ENCODE measurements at regions of chr11 and their contacts with region 1.

Region 1: GRCh38 chr11:61041755-61042518 is 60.4 kb upstream of the CD5 start:
- DNase-seq: peak; percentile 94
- ATAC-seq: peak; percentile 100
- H3K4me3 Mint-ChIP-seq: peak overlapping the region; percentile 64
- H3K27ac Mint-ChIP-seq: peak overlapping the region; percentile 94
- H3K4me1 Mint-ChIP-seq: peaks cover 58% of the 10 kb centered on the region
- H3K27me3 Mint-ChIP-seq: no peaks in the 10 kb centered on the region

Region 2: DNA sequence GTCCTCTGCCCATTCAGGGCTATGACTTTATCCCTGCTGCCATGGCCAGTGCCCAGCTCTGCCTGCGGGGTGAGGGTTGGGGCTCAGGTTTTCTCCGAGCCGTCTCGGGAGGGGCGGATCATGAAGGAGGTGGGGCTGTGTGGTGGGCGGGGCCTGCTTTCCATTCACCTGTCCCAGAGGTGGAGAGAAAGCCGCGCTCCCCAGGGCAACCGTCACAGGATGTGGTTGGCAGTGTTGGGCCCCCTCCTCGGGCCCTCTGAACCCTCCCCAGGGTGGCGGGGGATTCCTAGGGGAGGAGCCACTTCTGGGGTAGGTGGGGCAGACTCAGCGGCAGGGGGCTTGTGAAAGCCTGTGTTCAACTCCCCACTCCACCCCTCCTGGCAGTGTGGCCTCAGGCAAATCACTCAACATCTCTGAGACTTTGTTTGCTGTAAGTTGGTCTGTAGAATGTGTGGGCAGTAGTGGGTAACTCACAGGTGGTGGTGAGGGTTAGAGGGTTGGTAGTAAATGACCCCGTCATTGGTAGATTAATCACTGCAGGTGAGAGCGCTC is 20.2 kb before region 1 on chr11:
- CTCF ChIA-PET with region 1: interaction called, 4 read pairs
- POLR2A ChIA-PET with region 1: interaction called, 67 read pairs
- DNase-seq: peak; percentile 86
- ATAC-seq: peak; percentile 52
- H3K4me3 Mint-ChIP-seq: peak overlapping the region; percentile 19
- H3K27ac Mint-ChIP-seq: peak overlapping the region; percentile 85
- H3K4me1 Mint-ChIP-seq: peaks cover 69% of the 10 kb centered on the region
- H3K27me3 Mint-ChIP-seq: no peaks in the 10 kb centered on the region

Region 3: DNA sequence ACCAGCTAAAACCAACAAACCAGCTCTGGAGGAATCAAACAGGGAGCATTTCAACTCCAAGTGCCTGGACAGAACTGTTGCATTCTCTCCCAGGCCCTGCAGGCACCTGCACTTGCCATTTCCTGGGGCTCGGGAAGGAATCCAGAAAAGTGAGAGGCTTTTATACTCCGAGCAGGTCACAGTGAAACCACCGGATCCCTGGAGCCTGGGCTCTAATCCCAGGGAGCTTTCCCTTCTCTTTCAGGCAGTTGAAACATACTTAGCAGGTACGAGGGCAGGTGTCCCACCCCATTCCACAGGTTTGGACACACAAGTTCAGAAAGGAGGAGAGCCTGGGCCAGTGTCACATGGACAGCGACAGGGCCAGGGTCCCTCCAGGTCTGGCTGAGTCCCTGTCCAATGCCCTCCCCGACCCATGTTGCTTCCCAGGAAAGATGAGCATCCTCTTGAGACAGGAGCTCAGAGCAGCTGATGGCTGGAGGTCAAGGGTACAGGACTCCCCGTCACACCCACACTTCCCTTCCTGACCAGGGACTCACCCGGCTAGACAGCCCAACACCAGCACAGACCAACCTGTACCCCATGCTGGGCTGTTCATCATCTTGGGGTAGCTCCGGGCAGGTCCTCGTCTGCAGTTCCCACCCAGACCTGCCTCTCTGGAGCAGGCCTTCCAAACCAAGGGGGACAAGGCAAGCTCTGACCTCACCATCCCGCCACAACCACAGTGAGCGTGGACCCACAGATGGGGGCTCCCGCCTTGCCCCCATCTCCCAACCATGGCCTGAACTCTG is 10.4 kb after region 1 on chr11:
- CTCF ChIA-PET with region 1: interaction called, 19 read pairs
- POLR2A ChIA-PET with region 1: interaction called, 20 read pairs
- DNase-seq: no peak
- ATAC-seq: no peak
- H3K4me3 Mint-ChIP-seq: no peak overlapping the region
- H3K27ac Mint-ChIP-seq: peak overlapping the region; percentile 70
- H3K4me1 Mint-ChIP-seq: peaks cover 61% of the 10 kb centered on the region
- H3K27me3 Mint-ChIP-seq: no peaks in the 10 kb centered on the region

Region 4: DNA sequence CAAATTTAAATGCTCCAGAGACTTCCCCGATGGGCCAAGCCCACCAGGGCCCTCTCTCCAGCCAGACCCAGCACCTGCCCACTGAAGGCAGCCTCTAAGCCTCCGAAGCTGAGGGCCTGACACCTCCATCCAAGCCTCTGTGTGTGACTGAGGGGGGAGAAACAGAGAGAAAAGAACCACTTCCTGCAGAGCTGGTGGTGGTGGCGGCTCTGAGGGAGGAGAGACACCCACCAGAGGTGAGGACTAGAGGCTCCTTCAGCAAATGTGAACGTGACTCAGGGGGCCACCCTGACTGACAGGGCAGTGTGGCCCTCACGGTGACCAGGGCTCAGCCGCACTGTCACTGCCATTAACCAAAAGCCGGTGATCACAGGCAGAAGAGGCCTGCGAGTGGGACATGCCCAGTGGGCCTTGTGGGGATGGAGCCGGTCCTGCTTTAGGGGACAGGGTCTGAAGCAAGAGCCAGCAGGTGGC is 29.3 kb after region 1 on chr11:
- CTCF ChIA-PET with region 1: interaction called, 13 read pairs
- POLR2A ChIA-PET with region 1: interaction called, 23 read pairs
- DNase-seq: peak; percentile 87
- ATAC-seq: peak; percentile 97
- H3K4me3 Mint-ChIP-seq: peak overlapping the region; percentile 66
- H3K27ac Mint-ChIP-seq: peak overlapping the region; percentile 97
- H3K4me1 Mint-ChIP-seq: peaks cover 83% of the 10 kb centered on the region
- H3K27me3 Mint-ChIP-seq: no peaks in the 10 kb centered on the region

Region 5: DNA sequence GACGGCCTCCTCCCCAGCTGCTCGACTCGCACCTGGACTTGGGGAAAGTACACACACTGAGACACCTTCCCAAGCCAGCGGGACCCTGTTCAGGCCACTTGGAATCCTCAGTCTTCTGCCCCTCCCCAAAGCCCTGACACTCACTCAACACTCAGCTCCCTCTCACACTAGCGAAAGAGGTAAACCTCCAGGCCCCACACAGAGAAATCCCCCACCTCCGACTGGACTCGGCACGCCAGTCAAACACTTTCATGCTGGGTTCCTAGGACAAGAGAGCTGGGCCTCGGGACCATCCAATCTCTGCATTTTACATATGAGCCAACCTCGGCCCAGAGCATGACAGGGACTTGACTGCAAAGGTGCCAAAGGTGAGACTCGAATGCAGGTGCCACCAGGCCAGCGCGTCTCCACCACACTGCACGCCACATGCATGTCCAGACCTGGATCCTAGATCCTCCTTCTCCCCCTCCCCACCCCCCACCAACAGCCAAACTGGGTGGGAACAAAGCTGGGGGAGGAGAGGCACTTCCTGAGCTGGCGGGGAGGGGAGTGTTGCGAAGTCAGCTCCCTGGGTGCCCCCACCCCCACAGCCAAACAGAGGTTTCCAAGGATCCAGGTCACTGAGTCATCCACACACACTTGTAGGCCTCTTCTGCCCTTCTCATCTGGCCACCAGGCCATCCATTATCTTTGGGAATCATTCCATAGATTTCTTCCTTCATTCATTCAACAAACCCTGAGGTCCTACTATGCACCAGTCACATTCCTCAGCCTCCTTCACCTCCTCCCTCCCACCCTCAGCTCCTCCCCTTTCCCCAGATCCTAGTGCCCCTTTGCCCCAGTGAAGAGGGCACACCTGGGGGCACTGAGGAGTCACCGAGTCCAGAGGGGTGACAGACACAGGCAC is 49.7 kb after region 1 on chr11:
- CTCF ChIA-PET with region 1: interaction called, 3 read pairs
- POLR2A ChIA-PET with region 1: interaction called, 10 read pairs
- DNase-seq: no peak
- ATAC-seq: peak; percentile 12
- H3K4me3 Mint-ChIP-seq: peak overlapping the region; percentile 65
- H3K27ac Mint-ChIP-seq: peak overlapping the region; percentile 90
- H3K4me1 Mint-ChIP-seq: peaks cover 55% of the 10 kb centered on the region
- H3K27me3 Mint-ChIP-seq: no peaks in the 10 kb centered on the region

Measured in activated CD8-positive, alpha-beta T cell treated with anti-CD3 and anti-CD28 coated beads, Interleukin-2, amount 10 ng/mL, durations not matched to agents 7 days and 5 days (primary cell).